ENCODE measurements at regions of chr3 and their contacts with region 1.

Region 1: DNA sequence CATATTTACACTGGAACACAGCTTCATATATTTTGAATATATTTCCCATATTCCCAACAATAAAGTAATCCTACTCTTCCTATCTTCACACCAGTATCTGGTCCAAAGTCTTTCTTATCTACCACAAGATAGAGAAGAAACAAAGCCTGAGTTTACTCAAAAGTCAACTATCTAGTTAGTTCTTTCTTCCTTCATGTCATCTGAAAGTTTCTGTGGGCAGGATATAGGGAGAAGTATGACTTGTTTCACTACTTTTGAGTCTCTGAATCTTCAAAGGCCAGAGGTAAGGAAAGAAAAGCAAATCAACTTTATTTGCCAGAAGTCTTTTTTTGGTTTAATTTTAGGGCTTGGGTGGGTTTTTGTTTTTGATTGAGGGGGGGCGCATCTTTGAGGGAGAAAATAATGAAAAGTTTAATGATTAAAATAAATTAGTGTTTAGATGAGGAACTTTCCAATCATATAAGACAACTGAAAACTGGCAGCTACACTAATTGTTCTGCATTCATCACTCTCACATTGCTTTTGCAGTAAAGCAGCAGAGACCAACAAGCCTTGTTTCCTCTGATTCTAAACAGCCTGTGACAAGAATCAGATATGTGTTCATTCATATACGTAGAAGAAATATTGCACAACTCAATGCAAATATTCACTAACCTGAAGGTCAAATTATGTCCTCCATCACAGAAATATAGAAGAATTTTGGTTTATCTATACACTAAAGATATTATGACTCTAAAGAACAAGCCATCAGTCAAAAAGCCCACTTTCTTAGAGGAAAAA is 421.4 kb downstream of the SHQ1 start:
- DNase-seq: no peak
- H3K4me3 Mint-ChIP-seq: peak overlapping the region; percentile 55
- H3K27ac Mint-ChIP-seq: peak overlapping the region; percentile 90
- H3K4me1 Mint-ChIP-seq: peaks cover 59% of the 10 kb centered on the region
- H3K27me3 Mint-ChIP-seq: no peaks in the 10 kb centered on the region

Region 2: DNA sequence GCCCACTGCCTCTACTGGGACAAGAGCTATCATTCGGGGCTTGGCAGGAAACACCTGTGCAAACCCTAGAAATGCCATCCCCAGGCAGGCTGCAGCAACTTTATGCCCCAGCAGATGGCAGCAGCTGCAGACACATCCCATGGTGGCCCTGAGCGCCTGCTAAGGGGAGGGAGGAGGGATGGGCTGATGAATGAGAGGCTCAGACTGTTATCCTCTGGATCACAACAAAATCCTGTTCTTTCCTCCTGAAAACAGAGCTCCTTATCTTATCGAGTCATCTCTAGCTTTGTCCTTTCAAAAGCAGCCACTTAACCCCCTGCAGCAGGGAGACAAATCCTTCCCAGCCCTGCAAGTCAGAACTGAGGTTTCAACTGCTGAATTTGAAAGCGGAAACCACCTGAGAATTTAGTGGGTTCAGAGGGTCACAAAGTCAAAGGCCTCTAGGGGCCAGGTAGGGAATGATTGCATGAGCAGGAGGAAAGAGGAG is 551.3 kb before region 1 on chr3:
- intact Hi-C with region 1: loop called (anchors 5 kb)
- DNase-seq: peak; percentile 93
- H3K4me3 Mint-ChIP-seq: peak overlapping the region; percentile 14
- H3K27ac Mint-ChIP-seq: peak overlapping the region; percentile 74
- H3K4me1 Mint-ChIP-seq: peaks cover 28% of the 10 kb centered on the region
- H3K27me3 Mint-ChIP-seq: peaks cover 12% of the 10 kb centered on the region

Region 3: GRCh38 chr3:71893122-71893521 is 533.7 kb before region 1 on chr3:
- intact Hi-C with region 1: no loop called
- DNase-seq: no peak
- H3K4me3 Mint-ChIP-seq: no peak overlapping the region
- H3K27ac Mint-ChIP-seq: no peak overlapping the region
- H3K4me1 Mint-ChIP-seq: no peaks in the 10 kb centered on the region
- H3K27me3 Mint-ChIP-seq: peaks cover 15% of the 10 kb centered on the region

Region 4: GRCh38 chr3:72134989-72135451 is 291.8 kb before region 1 on chr3:
- intact Hi-C with region 1: loop called (anchors 5 kb)
- DNase-seq: peak; percentile 66
- H3K4me3 Mint-ChIP-seq: peak overlapping the region; percentile 75
- H3K27ac Mint-ChIP-seq: peak overlapping the region; percentile 96
- H3K4me1 Mint-ChIP-seq: peaks cover 39% of the 10 kb centered on the region
- H3K27me3 Mint-ChIP-seq: no peaks in the 10 kb centered on the region

Region 5: GRCh38 chr3:72375237-72376076 is 51.4 kb before region 1 on chr3:
- intact Hi-C with region 1: loop called (anchors 1 kb)
- DNase-seq: peak; percentile 68
- H3K4me3 Mint-ChIP-seq: peak overlapping the region; percentile 43
- H3K27ac Mint-ChIP-seq: peak overlapping the region; percentile 80
- H3K4me1 Mint-ChIP-seq: peaks cover 47% of the 10 kb centered on the region
- H3K27me3 Mint-ChIP-seq: no peaks in the 10 kb centered on the region

Region 6: GRCh38 chr3:72439321-72440183 is 12.7 kb after region 1 on chr3:
- intact Hi-C with region 1: loop called (anchors 1 kb)
- DNase-seq: peak; percentile 42
- H3K4me3 Mint-ChIP-seq: no peak overlapping the region
- H3K27ac Mint-ChIP-seq: no peak overlapping the region
- H3K4me1 Mint-ChIP-seq: peaks cover 75% of the 10 kb centered on the region
- H3K27me3 Mint-ChIP-seq: no peaks in the 10 kb centered on the region

Region 7: DNA sequence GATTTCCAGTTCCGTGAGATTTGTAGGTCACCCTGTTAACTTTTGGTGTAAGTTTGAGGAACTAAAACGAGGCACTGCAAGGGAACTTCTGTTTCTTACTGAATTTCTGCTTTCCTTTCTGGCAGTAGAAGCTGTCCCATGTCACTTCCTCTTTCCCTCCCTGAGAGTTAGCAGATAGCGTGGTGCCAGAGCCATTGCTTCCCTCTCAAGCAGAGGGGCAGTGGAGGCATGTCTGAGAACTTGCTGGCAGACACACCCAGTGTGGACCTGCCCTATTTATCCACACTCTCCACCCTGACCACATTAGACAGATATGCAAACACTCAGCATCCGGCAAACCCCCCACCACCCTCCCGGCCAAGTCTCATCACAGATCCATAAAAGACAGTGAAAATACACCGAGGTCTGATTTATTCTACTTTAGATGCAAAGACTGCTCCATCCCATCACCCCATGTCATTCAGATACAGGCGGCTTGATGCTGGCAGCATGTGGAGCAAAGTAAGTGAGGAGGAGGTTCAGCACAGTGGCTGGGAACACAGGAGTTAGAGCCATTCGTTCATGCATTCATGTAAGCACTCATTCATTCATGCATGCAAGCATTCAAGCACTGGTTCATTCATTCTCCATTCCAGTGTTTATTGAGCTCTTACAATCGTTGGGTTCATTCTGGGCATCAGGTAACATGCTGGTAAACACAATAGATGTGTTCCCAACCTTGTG is 96.8 kb after region 1 on chr3:
- intact Hi-C with region 1: loop called (anchors 1 kb)
- DNase-seq: no peak
- H3K4me3 Mint-ChIP-seq: no peak overlapping the region
- H3K27ac Mint-ChIP-seq: peak overlapping the region; percentile 91
- H3K4me1 Mint-ChIP-seq: peaks cover 36% of the 10 kb centered on the region
- H3K27me3 Mint-ChIP-seq: no peaks in the 10 kb centered on the region

Region 8: GRCh38 chr3:72629191-72629631 is 202.4 kb after region 1 on chr3:
- intact Hi-C with region 1: loop called (anchors 5 kb)
- DNase-seq: peak; percentile 60
- H3K4me3 Mint-ChIP-seq: peak overlapping the region; percentile 37
- H3K27ac Mint-ChIP-seq: peak overlapping the region; percentile 78
- H3K4me1 Mint-ChIP-seq: peaks cover 48% of the 10 kb centered on the region
- H3K27me3 Mint-ChIP-seq: no peaks in the 10 kb centered on the region